Dorsolateral prefrontal cortex (tissue), 120 donors: ENCODE measurements at regions of chr3 and their contacts with region 1.

Region 1: GRCh38 chr3:173045770-173046382 is 95.2 kb downstream of the SPATA16 start:
- DNase-seq: no peak
- H3K4me3 ChIP-seq: no peak overlapping the region
- H3K27ac ChIP-seq: no peak overlapping the region
- H3K27me3 ChIP-seq: no peaks in the 10 kb centered on the region
- CTCF ChIP-seq: peak; percentile 33 to 79 (median 58)

Region 2: DNA sequence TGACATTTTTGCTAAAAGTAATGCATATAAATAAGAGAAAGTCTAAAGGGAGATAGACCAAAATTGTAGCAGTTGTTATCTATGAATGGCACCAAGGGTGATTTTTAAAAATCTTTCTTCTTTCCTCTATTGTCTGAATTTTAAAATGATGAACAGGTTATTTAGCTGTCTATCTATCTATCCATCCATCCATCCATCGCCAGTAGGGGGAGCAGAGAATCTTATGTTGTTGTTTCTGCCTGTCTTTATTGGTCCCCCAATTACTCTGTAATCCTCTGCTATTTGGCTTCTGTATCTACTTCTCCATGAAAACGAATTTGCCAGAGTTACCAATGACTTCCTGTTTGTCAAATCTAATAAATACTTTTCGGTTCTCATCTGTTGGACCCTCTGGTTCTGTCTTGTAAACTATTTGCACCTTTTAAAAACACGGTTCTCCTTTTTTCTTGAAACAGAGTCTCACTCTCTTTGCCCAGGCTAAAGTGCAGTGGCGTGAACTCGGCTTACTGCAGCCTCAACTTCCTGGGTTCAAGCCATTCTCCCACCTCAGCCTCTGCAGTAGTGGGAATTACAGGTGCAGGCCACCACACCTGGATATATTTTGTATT is 209.4 kb before region 1 on chr3:
- intact Hi-C with region 1: loop called in 1 of 2 experiments (anchors 10 kb)
- DNase-seq: peak in 1 of 10 donors; percentile 38
- H3K4me3 ChIP-seq: no peak overlapping the region
- H3K27ac ChIP-seq: no peak overlapping the region
- H3K27me3 ChIP-seq: peaks cover 0 to 3% (median 0%) of the 10 kb centered on the region in 45 donors
- CTCF ChIP-seq: peak; percentile 41 to 78 (median 66)

Region 3: DNA sequence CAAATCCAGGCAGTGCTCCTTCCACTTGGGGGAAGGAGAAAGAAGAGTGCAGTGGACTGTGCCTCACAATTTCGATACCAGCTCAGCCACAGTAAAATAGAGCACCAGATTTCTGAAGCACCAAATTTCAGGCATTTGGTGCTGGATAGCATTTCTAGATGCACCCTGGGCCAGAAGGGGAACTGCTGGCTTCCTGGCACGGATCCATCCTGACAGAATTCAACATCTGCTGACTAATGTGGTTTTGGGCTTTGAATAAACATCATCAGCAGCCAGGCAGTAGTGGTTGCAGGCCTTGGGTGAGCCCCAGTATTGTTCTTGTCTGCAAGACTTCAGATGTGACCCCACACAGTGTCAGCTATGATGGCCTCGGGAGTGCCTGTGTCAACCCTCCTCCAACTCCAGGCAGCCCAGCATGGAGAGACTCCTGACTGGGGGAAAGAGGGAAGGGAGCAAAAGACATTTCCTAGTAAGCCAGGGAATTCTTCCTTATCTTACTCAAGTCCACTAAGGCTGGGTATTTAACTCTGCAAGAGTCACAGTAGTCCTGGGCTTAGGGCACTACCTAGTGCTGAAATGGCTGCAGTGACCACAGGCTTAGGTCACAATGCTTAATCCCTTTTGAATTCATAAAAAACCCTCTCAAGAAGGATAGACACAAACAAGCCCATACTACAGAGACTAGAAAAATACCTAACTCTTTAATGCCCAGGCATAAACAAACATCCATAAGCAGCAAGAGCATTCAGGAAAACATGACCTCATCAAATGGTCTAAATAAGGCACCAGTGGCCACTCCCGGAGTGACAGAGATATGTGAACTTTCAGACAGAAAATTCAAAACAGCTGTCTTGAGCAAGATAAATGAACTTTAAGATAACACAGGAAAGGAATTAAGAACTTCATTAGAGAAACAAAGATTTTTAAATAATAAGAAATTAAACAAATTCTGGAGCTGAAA is 20.4 kb after region 1 on chr3:
- intact Hi-C with region 1: loop called in 1 of 2 experiments (anchors 1 kb)
- DNase-seq: no peak
- H3K4me3 ChIP-seq: no peak overlapping the region
- H3K27ac ChIP-seq: no peak overlapping the region
- H3K27me3 ChIP-seq: peaks cover 0 to 3% (median 0%) of the 10 kb centered on the region in 45 donors
- CTCF ChIP-seq: no peak